ENCODE measurements at regions of chr12 and their contacts with region 1.

Region 1: GRCh38 chr12:89524541-89525285 is at the start of gene GALNT4:
- DNase-seq: peak; percentile 94
- H3K4me3 Mint-ChIP-seq: peak within 1 kb of the TSS; percentile 98
- H3K27ac Mint-ChIP-seq: peak within 1 kb of the TSS; percentile 99
- H3K4me1 Mint-ChIP-seq: peaks cover 49% of the 10 kb centered on the region
- H3K27me3 Mint-ChIP-seq: no peaks in the 10 kb centered on the region
- total RNA-seq, gene GALNT4: 6.9 and 7.6 TPM in 2 replicates

Region 2: GRCh38 chr12:88035271-88035906 is 1489.3 kb before region 1 on chr12:
- intact Hi-C with region 1: loop called (anchors 1 kb)
- DNase-seq: peak; percentile 97
- H3K4me3 Mint-ChIP-seq: peak overlapping the region; percentile 99
- H3K27ac Mint-ChIP-seq: peak overlapping the region; percentile 98
- H3K4me1 Mint-ChIP-seq: peaks cover 40% of the 10 kb centered on the region
- H3K27me3 Mint-ChIP-seq: no peaks in the 10 kb centered on the region

Region 3: GRCh38 chr12:89450907-89451306 is 73.8 kb before region 1 on chr12:
- intact Hi-C with region 1: no loop called
- DNase-seq: no peak
- H3K4me3 Mint-ChIP-seq: no peak overlapping the region
- H3K27ac Mint-ChIP-seq: no peak overlapping the region
- H3K4me1 Mint-ChIP-seq: peaks cover 14% of the 10 kb centered on the region
- H3K27me3 Mint-ChIP-seq: no peaks in the 10 kb centered on the region

Region 4: GRCh38 chr12:89494411-89495231 is 30.1 kb before region 1 on chr12:
- intact Hi-C with region 1: loop called (anchors 1 kb)
- DNase-seq: peak; percentile 72
- H3K4me3 Mint-ChIP-seq: peak overlapping the region; percentile 44
- H3K27ac Mint-ChIP-seq: peak overlapping the region; percentile 96
- H3K4me1 Mint-ChIP-seq: peaks cover 14% of the 10 kb centered on the region
- H3K27me3 Mint-ChIP-seq: no peaks in the 10 kb centered on the region

Region 5: DNA sequence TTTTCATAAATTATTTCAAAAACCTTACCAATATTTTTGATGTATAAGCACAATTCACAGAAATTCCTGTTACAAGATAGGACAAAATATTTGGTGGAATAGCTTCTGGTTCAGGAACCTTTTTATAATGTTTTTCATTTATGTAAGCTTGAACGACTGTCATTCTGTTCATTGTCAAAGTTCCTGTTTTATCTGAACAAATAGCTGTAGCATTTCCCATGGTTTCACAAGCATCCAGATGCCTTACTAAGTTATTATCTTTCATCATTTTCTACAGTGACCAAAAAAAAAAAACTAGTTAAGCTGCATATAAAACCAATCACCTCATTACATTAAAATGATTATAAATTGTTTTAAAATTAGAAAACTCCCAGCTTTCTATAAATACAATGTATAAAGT is 96.8 kb after region 1 on chr12:
- intact Hi-C with region 1: no loop called
- DNase-seq: no peak
- H3K4me3 Mint-ChIP-seq: no peak overlapping the region
- H3K27ac Mint-ChIP-seq: no peak overlapping the region
- H3K4me1 Mint-ChIP-seq: no peaks in the 10 kb centered on the region
- H3K27me3 Mint-ChIP-seq: no peaks in the 10 kb centered on the region

Measured in activated CD4-positive, alpha-beta T cell treated with anti-CD3 and anti-CD28 coated beads, Interleukin-2, amount 10 ng/mL, durations not matched to agents 24 days and 14 days (primary cell).